Motor neuron (in vitro differentiated cells): ENCODE measurements at regions of chr9 and their contacts with region 1.

Region 1: GRCh38 chr9:38362852-38363593 is 29.5 kb upstream of the ALDH1B1 start:
- ATAC-seq: peak; percentile 85 to 94 (median 90)
- H3K4me3 ChIP-seq: no peak overlapping the region
- H3K27ac ChIP-seq: no peak overlapping the region
- H3K4me1 ChIP-seq: peaks cover 26 to 28% of the 10 kb centered on the region in 2 donors

Region 2: GRCh38 chr9:37374892-37375291 is 988.1 kb before region 1 on chr9:
- in situ Hi-C with region 1: no loop called
- ATAC-seq: no peak
- H3K4me3 ChIP-seq: no peak overlapping the region
- H3K27ac ChIP-seq: no peak overlapping the region
- H3K4me1 ChIP-seq: no peaks in the 10 kb centered on the region

Region 3: GRCh38 chr9:37913480-37914153 is 449.4 kb before region 1 on chr9:
- in situ Hi-C with region 1: loop called in 7 of 9 experiments (anchors 10 to 25 kb)
- ATAC-seq: peak; percentile 66 to 98 (median 97)
- H3K4me3 ChIP-seq: no peak overlapping the region
- H3K27ac ChIP-seq: no peak overlapping the region
- H3K4me1 ChIP-seq: peaks cover 14 to 20% of the 10 kb centered on the region in 2 donors

Region 4: DNA sequence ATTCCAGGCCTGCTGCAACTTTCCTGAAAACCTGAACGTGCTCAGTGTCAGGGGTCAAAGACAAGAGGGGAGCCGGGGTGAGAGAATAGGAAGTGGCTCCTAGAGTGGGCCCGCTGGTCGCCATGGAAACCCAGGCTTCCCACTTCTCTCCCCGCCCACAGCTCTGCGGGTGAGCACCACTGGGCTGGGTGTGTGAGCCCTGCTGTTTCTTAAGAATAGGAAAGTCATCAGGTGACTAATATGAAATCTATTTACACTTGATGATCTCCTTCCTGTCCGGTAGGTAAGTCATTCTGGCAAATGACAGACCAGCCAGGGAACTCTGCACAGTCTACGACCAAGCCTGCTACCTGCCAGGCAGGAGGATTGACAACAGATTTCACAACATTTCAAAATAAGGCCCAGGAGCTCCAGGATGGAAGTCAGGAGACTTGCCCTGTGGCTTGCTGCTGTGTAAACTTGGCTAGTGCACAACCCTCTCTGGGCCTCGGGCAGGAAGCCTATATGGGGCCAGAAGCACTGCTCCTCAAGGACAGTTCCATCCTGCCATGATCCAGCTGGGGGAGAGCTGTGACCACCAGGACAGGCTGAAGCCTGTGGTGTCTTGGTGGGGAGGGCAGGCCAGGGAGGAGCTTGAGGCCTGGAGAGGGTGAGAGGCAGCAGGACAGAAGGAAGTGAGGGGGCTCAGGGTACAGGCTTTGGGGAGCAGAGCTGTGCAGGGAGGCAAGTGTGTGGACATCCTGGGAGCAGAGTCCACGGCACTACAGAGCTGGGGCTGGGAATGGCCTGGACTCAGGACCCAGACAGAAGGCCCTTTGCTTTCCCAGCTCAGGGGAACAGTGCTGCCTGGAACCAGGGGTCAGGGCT is 354.6 kb before region 1 on chr9:
- in situ Hi-C with region 1: loop called in 1 of 9 experiments (anchors 25 kb)
- ATAC-seq: peak; percentile 16 to 73 (median 67)
- H3K4me3 ChIP-seq: no peak overlapping the region
- H3K27ac ChIP-seq: peak overlapping the region; percentile 4 to 40
- H3K4me1 ChIP-seq: peaks cover 40 to 47% of the 10 kb centered on the region in 2 donors

Region 5: DNA sequence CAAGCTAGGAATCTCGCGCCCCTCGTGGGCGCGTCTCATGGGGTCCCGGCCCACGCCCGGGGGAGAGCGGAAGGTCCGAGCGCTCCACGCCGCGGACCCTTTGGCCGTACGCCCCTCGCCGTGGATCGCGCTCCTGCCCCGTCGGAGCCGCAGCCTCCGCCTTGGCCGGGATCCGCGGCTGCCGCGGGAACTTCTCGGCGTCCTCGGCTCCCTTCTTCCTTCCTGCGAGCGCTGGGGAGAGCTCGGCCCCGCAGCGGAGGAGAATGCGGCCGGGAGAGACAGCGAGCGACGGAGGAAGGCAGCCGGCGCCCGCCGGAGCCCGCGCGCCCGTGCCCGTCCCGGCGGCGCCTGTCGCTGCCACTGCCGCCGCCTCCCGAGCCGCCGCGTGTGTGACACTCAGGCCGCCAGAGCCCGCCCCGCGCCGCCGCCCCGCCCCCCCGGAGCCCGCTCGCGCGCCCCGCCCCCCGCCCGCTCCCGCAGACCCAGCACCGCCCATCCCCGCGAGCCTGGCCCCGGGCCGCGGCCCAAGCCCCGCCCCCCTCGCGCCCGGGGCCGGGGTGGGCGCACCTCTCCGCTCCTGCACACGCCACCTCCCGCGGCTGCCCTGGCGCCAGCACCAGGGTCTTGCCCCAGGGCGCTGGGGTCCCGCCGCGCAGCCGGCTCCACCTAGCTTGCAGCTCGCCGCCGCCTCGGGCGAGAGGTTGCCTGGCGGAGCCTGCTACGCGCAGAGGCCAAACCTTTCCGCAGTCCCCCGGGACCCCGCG is 294.0 kb before region 1 on chr9 and contains the start of gene SHB:
- in situ Hi-C with region 1: loop called in 1 of 9 experiments (anchors 25 kb)
- ATAC-seq: peak; percentile 47 to 80 (median 78)
- H3K4me3 ChIP-seq: peak within 1 kb of the TSS; percentile 58 to 67 (median 60)
- H3K27ac ChIP-seq: peak within 1 kb of the TSS; percentile 84 to 87
- H3K4me1 ChIP-seq: peaks cover 8 to 18% of the 10 kb centered on the region in 2 donors
- total RNA-seq, gene SHB: 2.8 to 12.8 (median 8.7) TPM

Region 6: DNA sequence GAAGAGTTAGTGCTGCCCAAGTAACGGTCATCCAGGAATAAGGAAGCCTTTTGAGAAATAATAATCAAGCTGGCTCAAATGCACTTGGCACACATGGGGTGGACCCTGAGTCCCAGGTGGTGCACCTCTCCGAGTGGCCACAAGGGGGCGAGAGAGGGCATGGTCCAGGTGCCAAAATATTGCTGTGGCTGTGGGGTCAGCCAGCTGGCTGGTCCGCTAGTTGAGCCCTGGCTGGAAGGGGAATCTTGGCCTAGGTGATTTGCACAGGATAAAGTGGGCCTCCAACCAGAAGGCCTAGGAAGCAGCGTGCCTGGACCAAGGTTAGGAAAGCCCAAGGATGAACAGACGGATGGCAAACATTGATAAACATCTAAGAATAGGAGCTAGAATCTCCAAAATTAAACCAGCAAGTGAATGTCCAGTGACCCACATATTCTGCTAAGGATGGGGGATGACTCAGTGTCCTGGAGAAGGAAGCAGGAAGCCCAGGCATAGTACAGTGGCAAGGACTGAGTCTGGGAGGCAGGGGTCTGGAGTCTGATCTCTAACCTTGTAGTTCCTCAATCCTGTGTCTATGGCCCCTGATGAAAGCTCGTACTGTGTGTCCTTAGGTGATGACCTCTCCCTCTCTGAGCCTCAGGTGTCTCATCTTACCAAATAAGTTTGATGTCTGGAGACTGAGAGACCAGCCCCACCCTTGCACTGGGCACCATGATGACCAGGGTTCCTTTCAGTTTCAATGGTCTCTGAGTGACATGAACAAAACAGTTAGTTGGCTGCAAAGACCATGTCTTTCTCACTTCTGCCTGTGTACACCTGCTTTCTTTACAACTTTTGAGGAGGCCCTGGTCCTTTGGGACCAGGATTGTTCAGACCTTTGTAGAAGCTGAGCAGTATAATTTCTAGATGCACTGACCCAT is 274.8 kb before region 1 on chr9:
- in situ Hi-C with region 1: loop called in 3 of 9 experiments (anchors 10 to 25 kb)
- ATAC-seq: peak; percentile 58 to 90 (median 68)
- H3K4me3 ChIP-seq: no peak overlapping the region
- H3K27ac ChIP-seq: no peak overlapping the region
- H3K4me1 ChIP-seq: peaks cover 16 to 17% of the 10 kb centered on the region in 2 donors

Region 7: DNA sequence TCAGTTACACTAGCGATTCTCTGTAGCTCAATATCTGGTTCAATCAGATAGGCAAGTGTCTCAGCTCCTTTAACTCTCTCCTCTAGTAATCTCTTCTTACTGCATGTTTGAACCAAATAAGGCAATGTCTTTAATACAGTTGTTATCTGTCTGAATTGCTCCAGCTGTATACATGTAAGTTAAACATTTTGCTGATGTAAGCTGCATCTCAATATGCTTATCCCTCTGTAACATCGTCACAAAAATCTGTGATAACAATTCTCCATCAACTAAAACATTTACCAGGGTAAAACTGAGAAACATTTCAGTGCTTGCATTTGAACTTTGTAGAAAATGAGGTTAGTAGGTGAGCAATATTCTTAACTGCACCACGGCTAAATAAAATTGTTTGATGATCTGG is 90.8 kb after region 1 on chr9:
- in situ Hi-C with region 1: no loop called
- ATAC-seq: no peak
- H3K4me3 ChIP-seq: no peak overlapping the region
- H3K27ac ChIP-seq: no peak overlapping the region
- H3K4me1 ChIP-seq: no peaks in the 10 kb centered on the region